Ovary (tissue), 10 donors: ENCODE measurements at regions of chr1 and their contacts with region 1.

Region 1: GRCh38 chr1:51906306-51907078 is 28.0 kb upstream of the NRDC start:
- DNase-seq: no peak
- H3K4me3 ChIP-seq: no peak overlapping the region
- H3K27ac ChIP-seq: no peak overlapping the region
- H3K4me1 ChIP-seq: no peaks in the 10 kb centered on the region
- H3K27me3 ChIP-seq: peaks cover 3% of the 10 kb centered on the region
- CTCF ChIP-seq: no peak
- EP300 ChIP-seq: no peak
- POLR2A ChIP-seq: no peak

Region 2: GRCh38 chr1:51990478-51990965 is 84.0 kb after region 1 on chr1 and contains the start of gene RAB3B:
- intact Hi-C with region 1: loop called in 2 of 4 experiments (anchors 5 to 10 kb)
- DNase-seq: peak; percentile 68 to 86 (median 79)
- H3K4me3 ChIP-seq: peak within 1 kb of the TSS; percentile 35
- H3K27ac ChIP-seq: no peak within 1 kb of the TSS
- H3K4me1 ChIP-seq: peaks cover 3% of the 10 kb centered on the region
- H3K27me3 ChIP-seq: no peaks in the 10 kb centered on the region
- CTCF ChIP-seq: no peak
- EP300 ChIP-seq: no peak
- POLR2A ChIP-seq: no peak
- total RNA-seq, gene RAB3B: 1.1 to 8.2 (median 4.0) TPM